Ovary (tissue), 10 donors: ENCODE measurements at regions of chr2 and their contacts with region 1.

Region 1: GRCh38 chr2:70871398-70872211 is 36.0 kb upstream of the CD207 start:
- DNase-seq: peak; percentile 73 to 86 (median 77)
- H3K4me3 ChIP-seq: no peak overlapping the region
- H3K27ac ChIP-seq: no peak overlapping the region
- H3K4me1 ChIP-seq: peaks cover 4% of the 10 kb centered on the region
- H3K27me3 ChIP-seq: no peaks in the 10 kb centered on the region
- CTCF ChIP-seq: peak; percentile 52 to 79 (median 67)
- EP300 ChIP-seq: no peak
- POLR2A ChIP-seq: no peak

Region 2: GRCh38 chr2:70942396-70943204 is 71.0 kb after region 1 on chr2:
- intact Hi-C with region 1: loop called (anchors 5 kb)
- DNase-seq: peak in 1 of 5 donors; percentile 2
- H3K4me3 ChIP-seq: no peak overlapping the region
- H3K27ac ChIP-seq: no peak overlapping the region
- H3K4me1 ChIP-seq: no peaks in the 10 kb centered on the region
- H3K27me3 ChIP-seq: no peaks in the 10 kb centered on the region
- CTCF ChIP-seq: no peak
- EP300 ChIP-seq: no peak
- POLR2A ChIP-seq: no peak

Region 3: DNA sequence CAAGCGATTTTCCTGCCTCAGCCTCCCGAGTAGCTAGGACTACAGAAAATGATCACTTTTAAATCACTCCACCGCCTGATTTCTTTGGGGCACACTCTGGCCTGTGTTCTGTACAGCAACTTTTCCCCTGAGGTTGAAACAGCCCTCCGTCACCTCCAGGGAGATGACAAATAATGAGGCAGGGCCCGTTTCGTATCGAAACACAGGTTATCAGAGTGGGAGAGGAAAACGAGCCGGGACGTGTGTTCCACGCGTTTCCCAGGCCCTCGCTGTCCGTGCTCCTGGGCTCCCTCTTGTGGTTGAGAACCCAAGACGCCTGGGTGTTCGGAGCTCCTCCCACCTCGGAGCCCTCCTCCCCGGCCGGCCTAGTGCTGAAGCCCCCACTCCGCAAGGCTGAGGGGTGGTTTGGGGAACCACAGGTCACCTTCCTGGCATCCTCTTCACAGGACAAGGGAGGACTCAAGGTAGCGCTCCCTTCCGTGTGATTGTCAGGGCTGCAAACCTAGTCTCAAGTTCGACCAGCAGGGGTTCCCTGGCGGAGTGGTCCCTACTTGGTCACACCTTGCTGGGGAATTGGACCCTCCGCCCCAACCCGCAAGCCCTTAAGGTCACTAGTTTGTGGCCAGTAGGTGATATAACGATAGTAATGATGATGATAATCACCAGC is 76.9 kb after region 1 on chr2:
- intact Hi-C with region 1: loop called (anchors 5 kb)
- DNase-seq: peak; percentile 67 to 82 (median 81)
- H3K4me3 ChIP-seq: no peak overlapping the region
- H3K27ac ChIP-seq: no peak overlapping the region
- H3K4me1 ChIP-seq: no peaks in the 10 kb centered on the region
- H3K27me3 ChIP-seq: no peaks in the 10 kb centered on the region
- CTCF ChIP-seq: peak; percentile 63 to 73 (median 70)
- EP300 ChIP-seq: no peak
- POLR2A ChIP-seq: no peak

Region 4: GRCh38 chr2:71385012-71385411 is 513.4 kb after region 1 on chr2:
- intact Hi-C with region 1: no loop called
- DNase-seq: no peak
- H3K4me3 ChIP-seq: no peak overlapping the region
- H3K27ac ChIP-seq: no peak overlapping the region
- H3K4me1 ChIP-seq: no peaks in the 10 kb centered on the region
- H3K27me3 ChIP-seq: no peaks in the 10 kb centered on the region
- CTCF ChIP-seq: no peak
- EP300 ChIP-seq: no peak
- POLR2A ChIP-seq: no peak